Activated CD4-positive, alpha-beta T cell treated with anti-CD3 and anti-CD28 coated beads for 36 hours (primary cell): ENCODE measurements at regions of chr11 and their contacts with region 1.

Region 1: GRCh38 chr11:68383976-68384501 is 71.6 kb downstream of the LRP5 start:
- DNase-seq: peak; percentile 82
- ATAC-seq: peak; percentile 53
- H3K4me3 Mint-ChIP-seq: no peak overlapping the region
- H3K27ac Mint-ChIP-seq: no peak overlapping the region
- H3K4me1 Mint-ChIP-seq: peaks cover 10% of the 10 kb centered on the region
- H3K27me3 Mint-ChIP-seq: peaks cover 2% of the 10 kb centered on the region

Region 2: GRCh38 chr11:68312117-68312779 is 71.8 kb before region 1 on chr11 and contains the start of gene LRP5:
- CTCF ChIA-PET with region 1: no interaction called
- POLR2A ChIA-PET with region 1: no interaction called
- intact Hi-C with region 1: loop called in 1 of 2 experiments (anchors 5 kb)
- DNase-seq: peak; percentile 33
- ATAC-seq: peak; percentile 60
- H3K4me3 Mint-ChIP-seq: peak within 1 kb of the TSS; percentile 84
- H3K27ac Mint-ChIP-seq: peak within 1 kb of the TSS; percentile 83
- H3K4me1 Mint-ChIP-seq: peaks cover 21% of the 10 kb centered on the region
- H3K27me3 Mint-ChIP-seq: peaks cover 3% of the 10 kb centered on the region
- total RNA-seq, gene LRP5: 11.7 to 13.6 TPM

Region 3: GRCh38 chr11:68411501-68411991 is 27.5 kb after region 1 on chr11:
- CTCF ChIA-PET with region 1: no interaction called
- POLR2A ChIA-PET with region 1: no interaction called
- intact Hi-C with region 1: no loop called
- DNase-seq: no peak
- ATAC-seq: no peak
- H3K4me3 Mint-ChIP-seq: no peak overlapping the region
- H3K27ac Mint-ChIP-seq: no peak overlapping the region
- H3K4me1 Mint-ChIP-seq: peaks cover under 1% of the 10 kb centered on the region
- H3K27me3 Mint-ChIP-seq: no peaks in the 10 kb centered on the region

Region 4: GRCh38 chr11:68424981-68425865 is 41.2 kb after region 1 on chr11:
- CTCF ChIA-PET with region 1: no interaction called
- POLR2A ChIA-PET with region 1: no interaction called
- intact Hi-C with region 1: no loop called
- DNase-seq: no peak
- ATAC-seq: no peak
- H3K4me3 Mint-ChIP-seq: no peak overlapping the region
- H3K27ac Mint-ChIP-seq: no peak overlapping the region
- H3K4me1 Mint-ChIP-seq: no peaks in the 10 kb centered on the region
- H3K27me3 Mint-ChIP-seq: no peaks in the 10 kb centered on the region